Activated naive CD4-positive, alpha-beta T cell treated with anti-CD3 and anti-CD28 coated beads for 36 hours (primary cell): ENCODE measurements at regions of chr1 and their contacts with region 1.

Region 1: GRCh38 chr1:84143796-84144565 is at the start of gene PRKACB:
- DNase-seq: peak; percentile 21
- H3K4me3 Mint-ChIP-seq: peak within 1 kb of the TSS; percentile 89
- H3K27ac Mint-ChIP-seq: peak within 1 kb of the TSS; percentile 98
- H3K4me1 Mint-ChIP-seq: peaks cover 35% of the 10 kb centered on the region
- H3K27me3 Mint-ChIP-seq: no peaks in the 10 kb centered on the region
- total RNA-seq, gene PRKACB: 25.7 to 25.9 TPM

Region 2: DNA sequence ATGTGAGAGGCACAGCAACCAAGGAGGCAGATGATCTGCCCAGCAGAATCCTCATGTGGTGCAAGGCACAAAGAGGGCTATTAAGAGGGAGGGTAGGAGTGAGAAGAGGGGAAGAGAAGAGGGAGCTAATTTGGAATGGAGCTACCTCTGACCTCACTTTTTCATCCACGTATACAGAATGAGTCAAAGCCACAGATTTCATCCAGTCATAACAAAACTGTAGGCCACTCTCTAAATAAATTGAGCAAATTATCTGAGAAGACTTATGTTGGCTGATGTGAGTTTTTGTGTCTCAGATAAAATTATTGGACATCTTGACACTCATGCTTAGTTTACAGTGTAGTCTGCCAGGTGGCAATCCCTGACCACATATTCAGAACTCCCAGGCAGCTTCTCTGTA is 470.7 kb before region 1 on chr1:
- CTCF ChIA-PET with region 1: no interaction called
- intact Hi-C with region 1: no loop called
- DNase-seq: no peak
- H3K4me3 Mint-ChIP-seq: no peak overlapping the region
- H3K27ac Mint-ChIP-seq: no peak overlapping the region
- H3K4me1 Mint-ChIP-seq: no peaks in the 10 kb centered on the region
- H3K27me3 Mint-ChIP-seq: no peaks in the 10 kb centered on the region

Region 3: GRCh38 chr1:84156210-84156621 is 12.2 kb after region 1 on chr1:
- CTCF ChIA-PET with region 1: interaction called, 8 read pairs
- intact Hi-C with region 1: loop called (anchors 1 kb)
- DNase-seq: peak; percentile 19
- H3K4me3 Mint-ChIP-seq: peak overlapping the region; percentile 18
- H3K27ac Mint-ChIP-seq: peak overlapping the region; percentile 64
- H3K4me1 Mint-ChIP-seq: peaks cover 83% of the 10 kb centered on the region
- H3K27me3 Mint-ChIP-seq: no peaks in the 10 kb centered on the region

Region 4: GRCh38 chr1:84298328-84298683 is 154.3 kb after region 1 on chr1:
- CTCF ChIA-PET with region 1: interaction called, 6 read pairs
- intact Hi-C with region 1: loop called (anchors 1 kb)
- DNase-seq: peak; percentile 54
- H3K4me3 Mint-ChIP-seq: peak overlapping the region; percentile 81
- H3K27ac Mint-ChIP-seq: peak overlapping the region; percentile 28
- H3K4me1 Mint-ChIP-seq: peaks cover 35% of the 10 kb centered on the region
- H3K27me3 Mint-ChIP-seq: no peaks in the 10 kb centered on the region

Region 5: GRCh38 chr1:84339503-84339902 is 195.5 kb after region 1 on chr1:
- CTCF ChIA-PET with region 1: no interaction called
- intact Hi-C with region 1: no loop called
- DNase-seq: no peak
- H3K4me3 Mint-ChIP-seq: no peak overlapping the region
- H3K27ac Mint-ChIP-seq: no peak overlapping the region
- H3K4me1 Mint-ChIP-seq: peaks cover 7% of the 10 kb centered on the region
- H3K27me3 Mint-ChIP-seq: peaks cover 2% of the 10 kb centered on the region

Region 6: GRCh38 chr1:84573967-84574842 is 430.2 kb after region 1 on chr1 and contains the start of gene CTBS:
- CTCF ChIA-PET with region 1: interaction called, 4 read pairs
- intact Hi-C with region 1: loop called (anchors 1 kb)
- DNase-seq: peak; percentile 86
- H3K4me3 Mint-ChIP-seq: peak within 1 kb of the TSS; percentile 95
- H3K27ac Mint-ChIP-seq: peak within 1 kb of the TSS; percentile 98
- H3K4me1 Mint-ChIP-seq: peaks cover 28% of the 10 kb centered on the region
- H3K27me3 Mint-ChIP-seq: no peaks in the 10 kb centered on the region
- total RNA-seq, gene CTBS: 21.1 to 21.2 TPM

Region 7: DNA sequence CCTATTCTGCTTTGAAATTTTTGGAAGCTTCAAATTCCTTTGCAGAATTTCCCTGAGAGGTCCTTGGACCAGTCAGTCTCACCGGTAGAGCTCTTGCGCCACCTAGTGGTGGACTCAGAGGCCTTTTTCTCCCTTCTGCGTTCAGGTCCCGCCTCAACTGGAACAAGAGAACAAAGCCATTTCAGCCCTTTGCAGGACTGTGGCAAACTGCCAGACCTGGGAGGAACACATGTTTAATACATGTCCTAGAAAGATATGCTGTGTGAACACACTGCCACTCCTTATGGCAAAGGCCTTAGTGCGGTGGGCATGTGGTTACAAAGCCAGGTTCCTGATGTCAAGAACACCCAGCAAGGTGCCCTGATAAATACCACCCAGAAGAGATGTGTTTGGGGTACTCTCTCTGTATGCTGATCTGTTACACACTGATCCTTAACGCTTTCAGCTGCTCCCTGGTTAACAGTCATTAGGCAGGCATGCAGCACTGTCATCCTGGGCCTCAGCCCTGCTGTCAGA is 628.5 kb after region 1 on chr1:
- CTCF ChIA-PET with region 1: no interaction called
- intact Hi-C with region 1: loop called (anchors 1 kb)
- DNase-seq: peak; percentile 86
- H3K4me3 Mint-ChIP-seq: no peak overlapping the region
- H3K27ac Mint-ChIP-seq: no peak overlapping the region
- H3K4me1 Mint-ChIP-seq: no peaks in the 10 kb centered on the region
- H3K27me3 Mint-ChIP-seq: no peaks in the 10 kb centered on the region

Region 8: GRCh38 chr1:84996846-84997666 is 853.1 kb after region 1 on chr1 and contains the start of gene MCOLN2:
- CTCF ChIA-PET with region 1: interaction called, 3 read pairs
- intact Hi-C with region 1: loop called (anchors 5 kb)
- DNase-seq: peak; percentile 43
- H3K4me3 Mint-ChIP-seq: peak within 1 kb of the TSS; percentile 79
- H3K27ac Mint-ChIP-seq: peak within 1 kb of the TSS; percentile 80
- H3K4me1 Mint-ChIP-seq: peaks cover 40% of the 10 kb centered on the region
- H3K27me3 Mint-ChIP-seq: peaks cover 17% of the 10 kb centered on the region
- total RNA-seq, gene MCOLN2: 7.4 to 8.4 TPM